Activated B cell treated with CpG ODN at 0.5 μM for 24 hours (primary cell): ENCODE measurements at regions of chr4 and their contacts with region 1.

Region 1: DNA sequence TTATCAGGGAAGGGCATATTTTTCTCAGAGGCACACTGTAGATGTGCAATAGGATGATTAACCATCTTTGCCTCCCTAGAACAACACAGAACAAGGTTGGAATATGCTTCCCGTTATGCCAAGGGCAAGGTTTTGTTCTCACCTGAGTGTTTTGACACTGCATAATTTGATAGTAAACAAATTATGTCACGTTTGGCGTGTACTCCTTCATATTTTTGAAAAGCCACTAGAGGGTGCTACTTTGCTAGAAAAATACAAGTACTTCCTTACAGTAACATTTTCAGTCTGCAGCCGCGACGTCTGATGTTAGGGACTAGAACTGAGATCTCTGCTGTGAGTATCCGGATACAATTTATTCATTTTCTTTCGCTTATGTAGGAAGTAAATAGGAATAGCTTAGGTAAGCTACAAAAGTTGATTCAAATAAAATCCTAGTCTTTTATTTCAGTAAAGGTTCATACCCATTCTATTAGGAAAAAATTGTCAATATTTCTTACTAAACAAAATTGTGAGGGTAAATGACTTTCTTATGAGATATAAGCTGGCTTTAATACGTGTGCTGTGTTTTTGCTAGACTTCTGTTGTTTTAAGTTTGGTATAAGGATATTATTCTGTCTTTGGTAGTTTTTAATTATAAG is 181.1 kb upstream of the WDFY3 start:
- DNase-seq: no peak
- ATAC-seq: peak; percentile 86
- H3K4me3 Mint-ChIP-seq: no peak overlapping the region
- H3K27ac Mint-ChIP-seq: no peak overlapping the region
- H3K4me1 Mint-ChIP-seq: peaks cover 5% of the 10 kb centered on the region
- H3K27me3 Mint-ChIP-seq: no peaks in the 10 kb centered on the region
- CTCF ChIP-seq: peak; percentile 40

Region 2: DNA sequence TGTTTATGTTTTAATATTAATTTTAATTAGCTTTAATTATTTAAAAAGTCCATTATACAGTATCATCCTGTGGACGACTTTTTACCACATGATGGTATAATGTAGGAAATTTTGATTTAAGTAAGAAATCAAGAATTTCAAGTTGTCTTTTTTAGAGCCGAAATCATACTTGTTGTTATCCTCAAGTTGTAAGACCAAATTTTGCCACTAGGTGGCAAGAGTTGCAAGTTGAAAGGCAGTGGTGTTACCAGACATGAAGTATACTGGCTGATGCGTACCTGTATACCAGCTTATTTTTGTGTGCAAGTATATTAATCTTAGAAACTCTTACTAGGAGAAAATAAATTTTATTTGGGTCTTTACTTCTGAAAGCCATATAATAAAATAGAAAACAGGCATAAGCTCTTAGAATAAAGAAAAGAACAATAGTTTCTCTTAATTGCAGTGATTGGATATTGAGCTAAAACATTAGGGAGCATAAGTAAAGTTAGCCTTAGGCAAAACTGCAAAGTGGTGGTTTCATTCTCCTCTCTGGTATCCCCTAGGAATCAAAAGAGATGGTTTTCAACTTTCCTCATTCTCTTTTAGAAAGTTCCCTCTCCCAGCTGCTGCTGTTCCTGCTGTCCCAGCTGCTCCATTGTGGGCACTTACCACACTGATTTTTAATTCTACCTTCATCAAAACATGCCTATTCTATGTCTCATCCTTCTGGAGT is 63.0 kb before region 1 on chr4:
- CTCF ChIA-PET with region 1: interaction called, 14 read pairs
- POLR2A ChIA-PET with region 1: no interaction called
- intact Hi-C with region 1: no loop called
- DNase-seq: no peak
- ATAC-seq: peak; percentile 56
- H3K4me3 Mint-ChIP-seq: no peak overlapping the region
- H3K27ac Mint-ChIP-seq: no peak overlapping the region
- H3K4me1 Mint-ChIP-seq: peaks cover 5% of the 10 kb centered on the region
- H3K27me3 Mint-ChIP-seq: peaks cover 7% of the 10 kb centered on the region
- CTCF ChIP-seq: no peak

Region 3: DNA sequence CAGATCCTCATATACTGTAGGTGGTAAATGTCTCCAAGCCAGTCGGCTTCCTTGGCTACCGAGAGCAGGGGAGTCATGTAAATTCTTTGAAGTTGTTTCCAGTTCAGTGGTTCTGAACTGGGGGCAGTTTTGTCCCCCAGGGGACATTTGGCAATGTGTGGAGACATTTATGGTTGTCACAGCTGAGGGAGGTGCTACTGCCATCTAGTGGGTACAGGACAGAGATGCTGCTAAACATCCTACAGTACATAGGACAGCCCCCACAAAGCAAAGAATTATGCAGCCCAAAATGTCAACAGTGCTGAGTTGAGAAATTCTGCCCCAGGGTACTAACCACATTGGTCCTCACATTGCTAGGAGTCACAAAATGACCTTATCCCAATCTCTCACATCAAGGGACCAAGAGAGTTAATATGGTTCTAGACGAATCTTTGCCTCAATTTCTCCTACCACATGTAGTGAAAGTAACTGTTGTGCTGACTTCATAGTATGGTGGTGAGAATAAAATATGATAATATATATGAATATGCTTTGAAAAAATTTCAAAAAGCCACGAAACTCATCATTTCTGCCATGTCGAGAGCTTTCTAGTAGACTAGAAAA is 223.0 kb after region 1 on chr4:
- CTCF ChIA-PET with region 1: interaction called, 10 read pairs
- POLR2A ChIA-PET with region 1: no interaction called
- intact Hi-C with region 1: loop called (anchors 1 kb)
- DNase-seq: peak; percentile 23
- ATAC-seq: peak; percentile 94
- H3K4me3 Mint-ChIP-seq: peak overlapping the region; percentile 33
- H3K27ac Mint-ChIP-seq: peak overlapping the region; percentile 50
- H3K4me1 Mint-ChIP-seq: peaks cover 29% of the 10 kb centered on the region
- H3K27me3 Mint-ChIP-seq: no peaks in the 10 kb centered on the region
- CTCF ChIP-seq: no peak

Region 4: DNA sequence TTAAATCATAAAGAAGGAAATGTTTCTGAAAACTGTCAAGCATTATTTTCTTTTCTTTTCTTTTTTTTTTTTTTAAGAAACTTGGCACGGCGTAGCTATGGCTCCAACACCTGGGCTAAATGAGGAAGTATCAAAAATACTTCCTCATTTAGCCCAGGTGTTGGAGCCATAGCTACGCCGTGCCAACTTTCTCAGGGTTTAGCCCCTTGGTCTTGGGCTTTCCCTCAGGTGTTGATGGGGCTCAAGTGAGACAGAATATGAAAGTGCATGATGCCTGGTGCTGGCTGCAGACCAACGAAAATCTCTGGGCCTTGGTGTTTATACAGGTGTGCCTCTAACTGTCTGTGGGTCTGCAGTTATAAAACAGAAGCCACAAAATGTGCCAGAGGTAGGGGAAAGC is 460.1 kb after region 1 on chr4:
- CTCF ChIA-PET with region 1: interaction called, 4 read pairs
- POLR2A ChIA-PET with region 1: no interaction called
- intact Hi-C with region 1: loop called (anchors 1 kb)
- DNase-seq: no peak
- ATAC-seq: peak; percentile 90
- H3K4me3 Mint-ChIP-seq: peak overlapping the region; percentile 70
- H3K27ac Mint-ChIP-seq: peak overlapping the region; percentile 92
- H3K4me1 Mint-ChIP-seq: peaks cover 50% of the 10 kb centered on the region
- H3K27me3 Mint-ChIP-seq: no peaks in the 10 kb centered on the region
- CTCF ChIP-seq: no peak

Region 5: GRCh38 chr4:85798012-85798770 is 650.6 kb after region 1 on chr4:
- CTCF ChIA-PET with region 1: interaction called, 11 read pairs
- POLR2A ChIA-PET with region 1: no interaction called
- intact Hi-C with region 1: loop called (anchors 1 kb)
- DNase-seq: no peak
- ATAC-seq: no peak
- H3K4me3 Mint-ChIP-seq: no peak overlapping the region
- H3K27ac Mint-ChIP-seq: no peak overlapping the region
- H3K4me1 Mint-ChIP-seq: peaks cover 16% of the 10 kb centered on the region
- H3K27me3 Mint-ChIP-seq: no peaks in the 10 kb centered on the region
- CTCF ChIP-seq: no peak